Activated naive CD8-positive, alpha-beta T cell treated with anti-CD3 and anti-CD28 coated beads, Interleukin-2, amount 10 ng/mL, durations not matched to agents 7 days and 5 days (primary cell): ENCODE measurements at regions of chr10 and their contacts with region 1.

Region 1: DNA sequence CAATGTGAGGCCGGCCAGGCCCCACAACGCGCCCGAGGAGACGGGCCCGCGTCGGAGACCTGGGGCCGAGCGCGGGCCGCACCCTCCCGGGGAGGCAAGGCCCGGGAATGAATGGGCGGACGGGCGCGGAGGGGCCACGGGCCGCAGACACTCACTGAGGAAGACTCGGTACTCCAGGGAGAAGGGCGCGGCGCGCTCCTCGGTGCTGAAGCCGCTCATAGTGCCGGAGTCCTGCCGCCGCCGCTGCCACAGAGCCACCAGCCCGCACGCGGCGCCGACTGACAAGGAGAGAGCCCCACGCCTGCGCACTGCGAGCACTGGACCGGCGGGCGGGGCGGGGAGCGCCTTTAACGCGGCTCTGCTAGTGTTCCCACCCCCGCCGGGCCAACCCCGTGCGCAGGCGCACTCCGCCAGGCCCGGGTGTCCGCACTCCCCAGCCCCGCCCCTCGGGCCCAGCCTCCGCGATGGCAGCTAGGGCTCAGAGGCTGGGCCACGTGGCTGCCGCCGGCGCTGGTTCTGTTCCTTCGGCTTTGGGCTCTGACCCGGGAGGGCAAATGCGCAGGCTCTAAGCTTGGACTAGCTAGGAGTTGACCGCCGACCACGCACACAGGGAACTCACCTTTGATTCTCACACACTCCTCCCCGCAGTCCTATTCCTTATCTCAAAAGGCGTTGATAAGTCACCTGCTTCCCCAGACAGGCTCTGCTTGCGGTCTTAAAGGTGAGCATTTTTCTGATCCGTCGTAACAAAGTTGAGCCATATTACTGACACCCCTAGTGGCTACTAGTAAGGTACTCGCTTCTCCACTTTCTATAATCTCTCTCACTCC is at the start of gene PPA1:
- DNase-seq: peak; percentile 100
- ATAC-seq: peak; percentile 93
- H3K4me3 Mint-ChIP-seq: peak within 1 kb of the TSS; percentile 86
- H3K27ac Mint-ChIP-seq: peak within 1 kb of the TSS; percentile 85
- H3K4me1 Mint-ChIP-seq: peaks cover 42% of the 10 kb centered on the region
- H3K27me3 Mint-ChIP-seq: no peaks in the 10 kb centered on the region
- total RNA-seq, gene PPA1: 107 to 110 TPM

Region 2: GRCh38 chr10:70169649-70170364 is 63.5 kb before region 1 on chr10:
- POLR2A ChIA-PET with region 1: interaction called, 10 read pairs
- DNase-seq: no peak
- ATAC-seq: peak; percentile 5
- H3K4me3 Mint-ChIP-seq: peak overlapping the region; percentile 85
- H3K27ac Mint-ChIP-seq: peak overlapping the region; percentile 98
- H3K4me1 Mint-ChIP-seq: peaks cover 57% of the 10 kb centered on the region
- H3K27me3 Mint-ChIP-seq: no peaks in the 10 kb centered on the region

Region 3: DNA sequence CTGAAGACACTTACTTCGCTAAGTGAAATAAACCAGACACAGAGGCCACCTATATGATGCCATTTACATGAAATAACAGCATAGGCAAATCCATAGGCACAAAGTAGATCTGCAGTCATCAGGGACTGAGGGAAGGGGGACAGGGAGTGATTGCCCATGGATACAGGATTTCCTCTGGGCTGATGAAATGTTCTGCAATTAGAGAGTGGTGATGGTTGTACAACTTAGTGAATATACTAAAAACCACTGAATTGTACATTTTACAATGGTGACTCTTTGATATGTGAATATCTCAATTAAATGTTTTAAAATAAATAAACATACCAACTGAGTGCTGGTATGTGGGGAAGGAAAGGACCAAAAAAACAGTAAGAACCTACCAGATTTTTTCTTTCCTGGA is 20.4 kb before region 1 on chr10:
- POLR2A ChIA-PET with region 1: no interaction called
- DNase-seq: no peak
- ATAC-seq: no peak
- H3K4me3 Mint-ChIP-seq: no peak overlapping the region
- H3K27ac Mint-ChIP-seq: no peak overlapping the region
- H3K4me1 Mint-ChIP-seq: no peaks in the 10 kb centered on the region
- H3K27me3 Mint-ChIP-seq: no peaks in the 10 kb centered on the region

Region 4: GRCh38 chr10:70324339-70324861 is 91.1 kb after region 1 on chr10:
- POLR2A ChIA-PET with region 1: interaction called, 12 read pairs
- DNase-seq: peak; percentile 55
- ATAC-seq: peak; percentile 52
- H3K4me3 Mint-ChIP-seq: peak overlapping the region; percentile 37
- H3K27ac Mint-ChIP-seq: peak overlapping the region; percentile 96
- H3K4me1 Mint-ChIP-seq: peaks cover 36% of the 10 kb centered on the region
- H3K27me3 Mint-ChIP-seq: no peaks in the 10 kb centered on the region

Region 5: DNA sequence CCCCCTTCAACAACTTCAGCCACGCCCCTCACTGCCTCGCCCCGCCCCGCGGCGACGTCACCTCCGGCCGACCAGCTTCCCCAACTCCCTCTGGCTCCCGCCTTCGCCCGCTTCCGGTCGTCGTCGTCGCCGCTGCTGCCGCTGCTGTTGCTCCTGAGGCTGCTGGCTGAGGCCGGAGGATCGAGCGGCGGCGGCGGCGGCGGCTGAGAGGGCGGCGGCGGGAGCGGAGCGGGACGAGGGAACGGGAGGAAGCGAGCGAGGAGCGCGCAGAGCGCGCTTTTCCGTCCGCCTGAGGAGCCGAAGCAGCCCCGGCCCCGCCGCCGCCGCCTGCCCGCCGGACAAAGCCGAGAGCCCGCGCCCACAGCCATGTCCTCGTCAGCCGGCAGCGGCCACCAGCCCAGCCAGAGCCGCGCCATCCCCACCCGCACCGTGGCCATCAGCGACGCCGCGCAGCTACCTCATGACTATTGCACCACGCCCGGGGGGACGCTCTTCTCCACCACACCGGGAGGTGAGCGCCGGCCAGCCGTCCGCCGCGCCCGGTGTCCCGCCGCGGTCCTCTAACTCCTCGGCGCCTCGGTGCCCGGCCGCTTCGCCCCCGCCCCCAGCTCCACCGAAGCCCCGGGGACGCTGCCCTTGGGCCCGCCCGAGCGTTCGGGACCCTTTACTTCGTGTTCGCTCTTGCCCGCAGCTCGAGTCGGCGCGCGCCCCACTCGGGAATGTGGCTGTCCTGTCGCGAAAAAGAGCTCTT is 170.9 kb after region 1 on chr10 and contains the start of gene EIF4EBP2:
- POLR2A ChIA-PET with region 1: no interaction called
- DNase-seq: peak; percentile 100
- ATAC-seq: peak; percentile 82
- H3K4me3 Mint-ChIP-seq: peak within 1 kb of the TSS; percentile 89
- H3K27ac Mint-ChIP-seq: peak within 1 kb of the TSS; percentile 93
- H3K4me1 Mint-ChIP-seq: peaks cover 34% of the 10 kb centered on the region
- H3K27me3 Mint-ChIP-seq: no peaks in the 10 kb centered on the region
- total RNA-seq, gene EIF4EBP2: 49.3 to 54.2 TPM